IMR-90 (cell line): ENCODE measurements at regions of chr16 and their contacts with region 1.

Region 1: DNA sequence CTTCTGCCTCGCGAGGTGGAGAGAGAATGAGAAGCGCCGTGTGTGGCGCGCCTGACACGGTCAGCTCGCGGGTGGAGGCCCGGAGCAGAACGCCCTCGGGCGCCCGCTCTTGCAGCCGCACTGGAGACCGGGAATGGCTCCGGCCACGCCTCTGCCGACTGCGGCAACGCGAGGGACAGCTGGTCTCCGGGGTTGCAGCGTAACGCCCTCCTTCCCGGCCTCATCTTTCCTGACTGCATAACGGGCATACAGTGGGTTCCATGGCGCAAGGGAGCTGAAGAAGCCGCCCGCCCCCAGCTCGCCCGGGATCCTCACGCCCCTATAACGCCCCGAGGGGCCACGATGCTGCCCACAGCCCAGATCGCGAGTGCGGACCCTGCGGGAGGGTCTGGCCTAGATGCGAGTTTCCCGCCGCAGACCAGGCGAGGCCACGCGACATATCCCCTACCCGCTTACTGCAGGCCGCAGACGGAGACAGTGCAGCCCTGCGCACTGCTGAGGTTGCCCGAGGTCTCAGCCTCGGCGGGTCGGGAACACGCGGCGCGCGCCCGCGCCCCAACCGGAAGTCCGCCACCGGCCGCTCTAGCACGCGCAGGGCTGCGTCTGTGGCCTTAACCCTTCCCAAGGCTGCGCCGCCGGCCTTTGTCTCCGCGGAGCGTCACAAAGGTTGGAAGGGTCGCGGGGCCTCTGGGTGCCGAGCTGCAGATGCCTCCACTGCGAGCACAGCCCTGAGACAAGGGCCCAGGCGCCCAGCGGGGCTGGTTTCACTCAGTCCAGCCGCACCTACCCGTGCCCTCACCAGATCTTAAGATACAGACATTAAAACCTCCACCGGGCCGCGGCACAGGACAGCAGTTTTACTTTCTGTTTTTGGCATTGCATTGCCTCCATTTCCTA is 18.8 kb downstream of the BCL7C start:
- DNase-seq: peak; percentile 88
- ATAC-seq: peak; percentile 95
- H3K4me3 ChIP-seq: peak overlapping the region; percentile 82
- H3K27ac ChIP-seq: peak overlapping the region; percentile 94
- H3K4me1 ChIP-seq: peaks cover 11% of the 10 kb centered on the region
- H3K27me3 ChIP-seq: no peaks in the 10 kb centered on the region
- CTCF ChIP-seq: 0 out of 2 replicates have a peak, but pooled peaks have one; percentile 5
- POLR2A ChIP-seq: peak; percentile 75
- RAD21 ChIP-seq: no peak

Region 2: DNA sequence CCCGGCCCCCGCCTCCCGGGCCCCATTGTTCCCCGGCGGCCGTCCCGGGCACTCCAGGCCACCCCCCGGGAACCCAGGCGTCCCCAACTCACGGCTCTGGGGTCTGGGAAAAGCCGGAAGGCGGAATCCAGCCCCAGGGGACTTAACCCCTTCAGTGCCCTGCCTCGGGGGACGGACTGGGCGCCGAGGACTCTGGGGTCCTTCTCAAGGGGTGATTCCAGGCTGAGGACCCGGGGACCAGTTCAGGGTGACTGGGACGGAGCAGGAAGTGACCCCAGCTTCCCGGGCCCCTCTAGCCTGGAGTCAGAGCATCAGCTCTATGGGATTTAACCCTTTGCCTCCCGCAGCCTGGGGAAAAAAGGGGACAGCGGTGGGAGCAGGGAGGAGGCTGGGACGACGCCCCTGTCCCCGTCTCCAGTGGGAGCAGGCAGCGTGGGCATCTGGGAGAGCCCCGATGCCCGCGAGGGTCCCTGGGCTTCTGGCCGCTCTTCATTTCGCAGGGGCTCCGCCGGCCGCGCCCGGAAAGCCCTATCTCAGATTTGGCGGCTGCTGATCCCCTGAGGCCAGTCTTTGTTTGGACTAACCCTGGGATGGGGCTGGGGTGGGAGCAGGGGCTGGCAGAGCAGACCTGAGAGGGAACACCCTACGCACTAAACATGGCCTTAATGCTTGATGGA is 88.0 kb before region 1 on chr16 and contains the start of gene ZNF629:
- CTCF ChIA-PET with region 1: no interaction called
- POLR2A ChIA-PET with region 1: interaction called, 4 read pairs
- dilution Hi-C with region 1: no loop called
- in situ Hi-C with region 1: no loop called
- intact Hi-C with region 1: loop called (anchors 1 kb)
- DNase-seq: peak; percentile 57
- ATAC-seq: peak; percentile 88
- H3K4me3 ChIP-seq: peak within 1 kb of the TSS; percentile 96
- H3K27ac ChIP-seq: peak within 1 kb of the TSS; percentile 96
- H3K4me1 ChIP-seq: peaks cover 4% of the 10 kb centered on the region
- H3K27me3 ChIP-seq: 0 out of 2 replicates have a peak, but pooled peaks cover 2% of the 10 kb centered on the region
- CTCF ChIP-seq: no peak
- POLR2A ChIP-seq: 0 out of 2 replicates have a peak, but pooled peaks have one; percentile 22
- RAD21 ChIP-seq: 0 out of 2 replicates have a peak, but pooled peaks have one; percentile 3
- total RNA-seq, gene ZNF629: 9.1 and 9.4 TPM in 2 replicates

Region 3: GRCh38 chr16:30805370-30806169 is 69.5 kb before region 1 on chr16:
- CTCF ChIA-PET with region 1: interaction called, 4 read pairs
- POLR2A ChIA-PET with region 1: interaction called, 11 read pairs
- dilution Hi-C with region 1: no loop called
- in situ Hi-C with region 1: no loop called
- intact Hi-C with region 1: loop called (anchors 2 kb)
- DNase-seq: peak; percentile 74
- ATAC-seq: peak; percentile 96
- H3K4me3 ChIP-seq: peak overlapping the region; percentile 76
- H3K27ac ChIP-seq: peak overlapping the region; percentile 85
- H3K4me1 ChIP-seq: peaks cover 8% of the 10 kb centered on the region
- H3K27me3 ChIP-seq: no peaks in the 10 kb centered on the region
- CTCF ChIP-seq: no peak
- POLR2A ChIP-seq: peak; percentile 82
- RAD21 ChIP-seq: no peak

Region 4: DNA sequence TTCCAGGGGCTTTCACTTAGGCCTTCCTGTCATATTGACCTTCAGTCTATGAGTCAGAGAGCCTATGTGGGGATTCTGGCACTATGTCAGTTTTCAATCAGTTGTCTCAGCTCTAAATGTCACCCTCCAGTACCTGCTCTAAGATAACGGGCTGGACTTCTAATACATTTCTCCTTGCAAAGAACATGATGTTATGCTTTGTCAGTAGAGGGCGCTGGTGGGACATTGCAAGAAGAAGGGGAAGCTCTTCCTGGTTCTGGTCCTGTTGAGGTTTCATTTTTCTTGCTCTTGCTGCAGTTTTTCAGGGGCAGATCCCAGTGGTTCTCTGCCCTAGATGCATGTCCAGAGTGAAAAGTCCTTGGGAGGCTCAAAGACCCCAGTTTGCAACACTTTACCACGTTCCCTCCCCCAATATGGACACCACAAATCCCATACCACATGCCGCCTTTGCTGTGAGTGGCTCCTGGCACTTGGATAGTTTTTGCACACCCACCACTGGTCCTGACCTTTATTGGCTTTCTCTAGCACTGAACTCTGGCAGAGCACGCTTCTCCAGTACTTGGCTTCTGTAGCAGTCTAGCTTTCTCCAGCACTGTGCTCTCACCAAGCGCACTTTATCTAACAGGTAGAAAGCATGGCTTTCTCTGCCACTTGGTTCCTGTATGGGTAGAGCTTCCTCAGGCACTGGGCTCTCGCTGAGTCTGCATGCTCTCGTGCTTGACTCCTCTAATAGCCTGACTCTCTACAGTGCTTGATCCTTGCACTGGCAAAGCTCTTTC is 30.2 kb before region 1 on chr16:
- CTCF ChIA-PET with region 1: interaction called, 3 read pairs
- POLR2A ChIA-PET with region 1: no interaction called
- dilution Hi-C with region 1: no loop called
- in situ Hi-C with region 1: no loop called
- intact Hi-C with region 1: loop called (anchors 2 kb)
- DNase-seq: peak; percentile 90
- ATAC-seq: peak; percentile 92
- H3K4me3 ChIP-seq: no peak overlapping the region
- H3K27ac ChIP-seq: no peak overlapping the region
- H3K4me1 ChIP-seq: peaks cover 5% of the 10 kb centered on the region; the same call in 1 of the 2 replicates
- H3K27me3 ChIP-seq: no peaks in the 10 kb centered on the region
- CTCF ChIP-seq: peak; percentile 94
- POLR2A ChIP-seq: no peak
- RAD21 ChIP-seq: peak; percentile 91

Region 5: GRCh38 chr16:30893744-30894539 is 18.9 kb after region 1 on chr16 and contains the start of gene BCL7C:
- CTCF ChIA-PET with region 1: interaction called, 6 read pairs
- POLR2A ChIA-PET with region 1: interaction called, 5 read pairs
- dilution Hi-C with region 1: no loop called
- in situ Hi-C with region 1: no loop called
- intact Hi-C with region 1: loop called (anchors 2 kb)
- DNase-seq: peak; percentile 80
- ATAC-seq: peak; percentile 74
- H3K4me3 ChIP-seq: peak within 1 kb of the TSS; percentile 98
- H3K27ac ChIP-seq: peak within 1 kb of the TSS; percentile 90
- H3K4me1 ChIP-seq: peaks cover 23% of the 10 kb centered on the region
- H3K27me3 ChIP-seq: no peaks in the 10 kb centered on the region
- CTCF ChIP-seq: peak; percentile 49
- POLR2A ChIP-seq: peak; percentile 66
- RAD21 ChIP-seq: peak; percentile 25; the same call in 1 of the 2 replicates
- total RNA-seq, gene BCL7C: 32.3 and 38.6 TPM in 2 replicates

Region 6: DNA sequence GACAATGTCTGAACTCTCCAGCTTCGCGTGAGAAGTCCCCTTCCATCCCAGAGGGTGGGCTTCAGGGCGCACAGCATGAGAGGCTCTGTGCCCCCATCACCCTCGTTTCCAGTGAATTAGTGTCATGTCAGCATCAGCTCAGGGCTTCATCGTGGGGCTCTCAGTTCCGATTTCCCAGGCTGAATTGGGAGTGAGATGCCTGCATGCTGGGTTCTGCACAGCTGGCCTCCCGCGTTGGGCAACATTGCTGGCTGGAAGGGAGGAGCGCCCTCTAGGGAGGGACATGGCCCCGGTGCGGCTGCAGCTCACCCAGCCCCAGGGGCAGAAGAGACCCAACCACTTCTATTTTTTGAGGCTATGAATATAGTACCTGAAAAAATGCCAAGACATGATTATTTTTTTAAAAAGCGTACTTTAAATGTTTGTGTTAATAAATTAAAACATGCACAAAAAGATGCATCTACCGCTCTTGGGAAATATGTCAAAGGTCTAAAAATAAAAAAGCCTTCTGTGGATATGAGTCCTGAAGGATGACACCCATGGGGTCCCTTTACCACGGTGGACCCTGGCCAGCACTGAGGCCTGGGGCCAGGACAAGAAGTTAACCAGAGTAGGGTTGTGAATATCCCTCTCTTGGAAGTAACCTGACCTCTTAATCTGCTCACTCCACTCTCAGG is 507.6 kb after region 1 on chr16:
- CTCF ChIA-PET with region 1: no interaction called
- POLR2A ChIA-PET with region 1: no interaction called
- dilution Hi-C with region 1: no loop called
- in situ Hi-C with region 1: no loop called
- intact Hi-C with region 1: no loop called
- DNase-seq: peak; percentile 40
- ATAC-seq: peak; percentile 89
- H3K4me3 ChIP-seq: no peak overlapping the region
- H3K27ac ChIP-seq: no peak overlapping the region
- H3K4me1 ChIP-seq: no peaks in the 10 kb centered on the region; the same call in 1 of the 2 replicates
- H3K27me3 ChIP-seq: peaks cover 14% of the 10 kb centered on the region
- CTCF ChIP-seq: peak; percentile 64
- POLR2A ChIP-seq: no peak
- RAD21 ChIP-seq: peak; percentile 51